Posterior vena cava (tissue), 2 donors: ENCODE measurements at regions of chr1 and their contacts with region 1.

Region 1: GRCh38 chr1:34419663-34420136 is 243.0 kb downstream of the C1orf94 start:
- DNase-seq: no peak

Region 2: DNA sequence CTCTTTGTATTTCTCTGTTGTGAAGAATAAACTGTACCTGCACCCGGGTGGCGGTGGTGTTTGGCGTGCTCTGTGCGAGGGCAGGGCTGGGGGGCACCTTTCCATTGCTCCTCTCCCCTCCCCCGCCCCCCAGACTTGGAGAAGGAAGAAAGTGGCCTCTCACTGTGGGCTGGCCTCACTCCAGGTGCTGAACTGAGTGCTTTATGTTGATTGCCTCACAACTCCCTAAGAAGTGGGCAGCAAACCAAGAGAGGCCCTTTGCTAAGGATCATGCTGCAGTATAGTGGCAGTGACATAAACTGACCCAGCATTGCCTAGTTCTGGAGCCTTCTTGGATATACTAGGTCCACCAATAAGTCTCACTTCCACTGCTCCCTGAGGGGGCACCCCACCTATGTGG is 1119.0 kb before region 1 on chr1:
- intact Hi-C with region 1: loop called in 1 of 2 experiments (anchors 10 kb)
- DNase-seq: peak; percentile 83